ENCODE measurements at regions of chr4 and their contacts with region 1.

Region 1: GRCh38 chr4:82515705-82516104 is 46.1 kb downstream of the TMEM150C start:
- DNase-seq: peak; percentile 94
- H3K4me3 ChIP-seq: no peak overlapping the region
- H3K27ac ChIP-seq: peak overlapping the region; percentile 80
- H3K4me1 ChIP-seq: peaks cover 40% of the 10 kb centered on the region
- H3K27me3 ChIP-seq: no peaks in the 10 kb centered on the region
- CTCF ChIP-seq: no peak
- POLR2A ChIP-seq: no peak

Region 2: DNA sequence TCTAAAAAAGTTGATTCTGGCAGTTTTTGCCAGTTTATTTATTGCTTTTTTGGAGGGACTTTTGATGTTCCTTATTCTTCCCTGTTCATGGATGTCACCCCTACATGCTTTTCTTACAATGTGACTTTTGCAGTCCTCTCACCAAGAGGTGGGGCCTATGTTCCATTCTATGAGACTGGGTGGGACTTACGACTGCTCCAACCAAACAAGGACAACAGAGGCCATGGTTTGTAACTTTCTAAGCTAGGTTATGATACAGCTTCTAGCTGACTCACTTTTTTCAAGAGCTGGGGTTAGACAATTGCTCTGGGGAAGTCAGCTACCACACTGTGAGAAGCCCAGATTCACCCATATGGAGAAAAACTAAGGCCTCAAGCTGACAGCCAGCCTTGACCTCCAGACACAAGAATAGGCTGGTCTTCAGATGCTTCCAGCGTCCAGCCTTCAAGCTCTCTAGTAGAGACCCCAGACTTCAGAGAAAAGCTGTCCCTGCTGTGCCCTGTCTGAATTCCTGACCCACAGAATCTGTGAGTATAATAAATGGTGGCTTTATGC is 45.8 kb before region 1 on chr4:
- CTCF ChIA-PET with region 1: no interaction called
- POLR2A ChIA-PET with region 1: no interaction called
- dilution Hi-C with region 1: no loop called
- intact Hi-C with region 1: loop called (anchors 5 kb)
- DNase-seq: peak; percentile 61
- H3K4me3 ChIP-seq: no peak overlapping the region
- H3K27ac ChIP-seq: no peak overlapping the region
- H3K4me1 ChIP-seq: no peaks in the 10 kb centered on the region
- H3K27me3 ChIP-seq: no peaks in the 10 kb centered on the region
- CTCF ChIP-seq: no peak
- POLR2A ChIP-seq: no peak

Region 3: DNA sequence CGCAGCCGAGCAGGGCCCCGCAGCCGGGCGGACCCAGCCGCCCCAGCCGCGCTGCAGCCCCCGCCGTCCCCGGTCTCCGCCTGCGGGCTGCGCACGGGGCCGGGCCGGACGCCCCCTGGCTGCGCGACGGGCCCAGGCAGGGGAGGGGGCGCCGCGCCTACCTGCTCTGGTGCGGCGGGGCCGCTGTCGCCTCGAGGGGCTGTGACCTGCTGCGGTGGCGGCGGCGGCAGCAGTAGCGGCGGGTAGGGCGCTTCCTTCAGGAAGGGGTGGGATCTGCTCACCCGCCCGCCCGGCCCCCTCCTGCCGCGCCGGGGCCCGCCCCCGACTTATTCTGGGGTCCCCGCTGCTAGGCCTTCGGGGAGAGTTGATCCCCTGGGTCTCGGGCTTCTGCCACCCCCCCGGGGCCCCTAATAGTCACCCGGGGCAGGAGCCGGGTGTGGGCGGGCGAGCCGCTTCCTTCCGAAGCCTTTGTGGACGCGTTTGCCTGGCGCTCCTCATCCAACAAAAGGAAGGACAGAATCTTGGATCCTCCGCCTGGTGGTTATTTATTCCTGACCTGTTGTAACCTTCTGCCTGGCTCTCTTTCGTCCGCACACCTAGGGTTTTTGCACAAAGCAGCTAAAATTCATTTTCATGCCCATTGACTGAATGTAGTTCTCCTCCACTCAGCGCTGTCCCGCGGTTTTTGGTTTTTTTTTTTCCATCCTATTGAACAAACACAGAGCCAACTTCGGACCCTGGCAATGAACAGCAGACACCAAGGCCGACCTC is 46.2 kb after region 1 on chr4 and contains the start of gene TMEM150C:
- CTCF ChIA-PET with region 1: no interaction called
- POLR2A ChIA-PET with region 1: no interaction called
- dilution Hi-C with region 1: no loop called
- intact Hi-C with region 1: loop called (anchors 1 kb)
- DNase-seq: peak; percentile 26
- H3K4me3 ChIP-seq: peak within 1 kb of the TSS; percentile 58 to 81 (median 75)
- H3K27ac ChIP-seq: no peak within 1 kb of the TSS
- H3K4me1 ChIP-seq: peaks cover 4% of the 10 kb centered on the region
- H3K27me3 ChIP-seq: peaks cover 0 to 10% of the 10 kb centered on the region in 2 experiments
- CTCF ChIP-seq: no peak
- POLR2A ChIP-seq: no peak
- total RNA-seq, gene TMEM150C: 6.5 and 6.6 TPM in 2 replicates

Region 4: GRCh38 chr4:82694046-82694445 is 178.3 kb after region 1 on chr4:
- CTCF ChIA-PET with region 1: no interaction called
- POLR2A ChIA-PET with region 1: no interaction called
- dilution Hi-C with region 1: no loop called
- intact Hi-C with region 1: no loop called
- DNase-seq: peak; percentile 14
- H3K4me3 ChIP-seq: no peak overlapping the region
- H3K27ac ChIP-seq: no peak overlapping the region
- H3K4me1 ChIP-seq: peaks cover 9% of the 10 kb centered on the region
- H3K27me3 ChIP-seq: no peaks in the 10 kb centered on the region
- CTCF ChIP-seq: no peak
- POLR2A ChIP-seq: no peak